PC-3 (cell line): ENCODE measurements at regions of chr14 and their contacts with region 1.

Region 1: GRCh38 chr14:38900887-38901286 is 202.1 kb downstream of the SEC23A start:
- DNase-seq: peak; percentile 82
- ATAC-seq: peak; percentile 97
- H3K4me3 ChIP-seq: no peak overlapping the region
- H3K27ac ChIP-seq: peak overlapping the region; percentile 18; the same call in 1 of the 2 replicates
- H3K4me1 ChIP-seq: peaks cover 24% of the 10 kb centered on the region
- H3K27me3 ChIP-seq: no peaks in the 10 kb centered on the region
- CTCF ChIP-seq: no peak

Region 2: DNA sequence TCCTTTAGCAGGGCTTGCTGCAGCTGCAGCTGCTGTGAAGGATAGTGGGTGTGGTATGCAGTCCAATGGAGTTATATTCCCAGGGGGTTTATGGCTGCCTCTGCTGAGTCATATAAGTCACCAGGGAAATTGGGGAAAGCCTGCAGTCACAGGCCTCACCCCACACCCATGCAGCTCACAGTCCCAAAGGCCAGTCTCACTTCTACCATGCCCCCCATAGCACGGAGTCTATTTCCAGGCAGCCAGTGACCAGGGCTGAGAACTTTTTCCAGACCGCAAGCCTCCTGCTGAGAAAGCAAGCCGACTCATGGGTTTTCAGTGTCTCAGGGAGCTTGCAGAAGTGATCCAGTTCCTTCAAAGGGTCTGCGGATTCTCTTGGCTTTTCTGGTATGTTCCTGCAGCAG is 322.6 kb before region 1 on chr14:
- CTCF ChIA-PET with region 1: no interaction called
- POLR2A ChIA-PET with region 1: no interaction called
- intact Hi-C with region 1: no loop called
- DNase-seq: no peak
- ATAC-seq: no peak
- H3K4me3 ChIP-seq: no peak overlapping the region
- H3K27ac ChIP-seq: no peak overlapping the region
- H3K4me1 ChIP-seq: no peaks in the 10 kb centered on the region
- H3K27me3 ChIP-seq: 0 out of 2 replicates have a peak, but pooled peaks cover 3% of the 10 kb centered on the region
- CTCF ChIP-seq: no peak

Region 3: GRCh38 chr14:38951451-38951850 is 50.6 kb after region 1 on chr14:
- CTCF ChIA-PET with region 1: no interaction called
- POLR2A ChIA-PET with region 1: interaction called, 5 read pairs
- intact Hi-C with region 1: loop called (anchors 1 kb)
- DNase-seq: no peak
- ATAC-seq: peak; percentile 39
- H3K4me3 ChIP-seq: no peak overlapping the region
- H3K27ac ChIP-seq: no peak overlapping the region
- H3K4me1 ChIP-seq: 0 out of 2 replicates have a peak, but pooled peaks cover 5% of the 10 kb centered on the region
- H3K27me3 ChIP-seq: no peaks in the 10 kb centered on the region
- CTCF ChIP-seq: no peak

Region 4: GRCh38 chr14:39005044-39005880 is 104.4 kb after region 1 on chr14:
- CTCF ChIA-PET with region 1: no interaction called
- POLR2A ChIA-PET with region 1: no interaction called
- intact Hi-C with region 1: no loop called
- DNase-seq: no peak
- ATAC-seq: no peak
- H3K4me3 ChIP-seq: no peak overlapping the region
- H3K27ac ChIP-seq: no peak overlapping the region
- H3K4me1 ChIP-seq: no peaks in the 10 kb centered on the region
- H3K27me3 ChIP-seq: no peaks in the 10 kb centered on the region
- CTCF ChIP-seq: no peak